Activated T-helper 1 cell treated with anti-CD3 and anti-CD28 coated beads, Interleukin-12 subunit alpha, Interleukin-12 subunit beta, Interleukin-2, Interleukin-4 antibody, amounts not matched to agents 30 ng/mL and 10 ng/mL and 1 ng/mL, durations not matched to agents 14 hours and 24 hours and 36 hours (primary cell): ENCODE measurements at regions of chr15 and their contacts with region 1.

Region 1: GRCh38 chr15:50908210-50909009 is at the start of gene AP4E1:
- DNase-seq: peak; percentile 91
- H3K4me3 Mint-ChIP-seq: peak within 1 kb of the TSS; percentile 96
- H3K27ac Mint-ChIP-seq: peak within 1 kb of the TSS; percentile 98
- H3K4me1 Mint-ChIP-seq: peaks cover 15% of the 10 kb centered on the region
- H3K27me3 Mint-ChIP-seq: peaks cover 2% of the 10 kb centered on the region
- total RNA-seq, gene AP4E1: 15.8 and 17.0 TPM in 2 replicates

Region 2: DNA sequence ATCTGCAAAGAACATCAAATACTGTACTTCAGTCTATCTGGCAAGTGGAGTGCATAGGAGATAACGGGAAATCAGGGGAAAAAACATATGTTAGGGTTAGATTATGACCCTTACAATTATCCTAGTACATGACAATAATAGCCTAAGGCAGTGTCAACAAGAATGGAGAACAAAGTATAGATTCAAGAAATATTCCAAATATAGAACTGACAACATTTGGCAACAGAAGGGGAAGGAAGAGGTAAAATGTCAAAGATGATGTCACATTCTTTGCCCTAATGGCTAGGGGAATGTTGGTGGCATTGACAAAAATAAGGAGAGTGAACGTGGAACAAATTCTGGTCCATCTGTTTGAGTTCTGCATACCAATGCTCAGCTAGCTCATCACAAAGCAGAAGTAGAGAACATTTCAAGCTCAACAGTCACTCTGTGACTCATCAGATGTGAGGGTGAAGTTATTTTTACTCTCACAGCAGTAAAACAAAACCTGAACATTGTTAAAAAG is 773.8 kb before region 1 on chr15:
- intact Hi-C with region 1: loop called (anchors 1 kb)
- DNase-seq: no peak
- H3K4me3 Mint-ChIP-seq: peak overlapping the region; percentile 20
- H3K27ac Mint-ChIP-seq: peak overlapping the region; percentile 89
- H3K4me1 Mint-ChIP-seq: peaks cover 56% of the 10 kb centered on the region
- H3K27me3 Mint-ChIP-seq: no peaks in the 10 kb centered on the region

Region 3: GRCh38 chr15:50260969-50261496 is 647.4 kb before region 1 on chr15:
- intact Hi-C with region 1: loop called (anchors 1 kb)
- DNase-seq: no peak
- H3K4me3 Mint-ChIP-seq: peak overlapping the region; percentile 66
- H3K27ac Mint-ChIP-seq: peak overlapping the region; percentile 98
- H3K4me1 Mint-ChIP-seq: peaks cover 79% of the 10 kb centered on the region
- H3K27me3 Mint-ChIP-seq: no peaks in the 10 kb centered on the region

Region 4: GRCh38 chr15:50424066-50424890 is 484.1 kb before region 1 on chr15 and contains the start of gene USP8:
- intact Hi-C with region 1: loop called (anchors 2 kb)
- DNase-seq: peak; percentile 92
- H3K4me3 Mint-ChIP-seq: peak within 1 kb of the TSS; percentile 98
- H3K27ac Mint-ChIP-seq: peak within 1 kb of the TSS; percentile 92
- H3K4me1 Mint-ChIP-seq: peaks cover 25% of the 10 kb centered on the region
- H3K27me3 Mint-ChIP-seq: no peaks in the 10 kb centered on the region
- total RNA-seq, gene USP8: 66.2 and 66.3 TPM in 2 replicates

Region 5: DNA sequence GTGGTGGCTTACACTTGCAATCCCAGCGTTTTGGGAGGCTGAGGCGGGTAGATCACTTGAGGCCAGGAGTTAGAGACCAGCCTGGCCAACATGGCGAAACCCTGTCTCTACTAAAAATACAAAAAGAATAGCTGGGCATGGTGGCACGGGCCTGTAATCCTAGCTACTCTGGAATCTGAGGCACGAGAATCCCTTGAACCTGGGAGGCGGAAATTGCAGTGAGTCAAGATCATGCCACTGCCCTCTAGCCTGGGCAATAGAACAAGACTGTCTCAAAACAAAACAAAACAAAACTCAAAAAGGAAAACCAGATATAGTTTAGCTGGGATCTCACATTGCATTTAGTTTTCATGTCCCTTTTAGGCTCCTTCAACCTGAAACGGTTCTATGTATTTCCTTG is 359.1 kb before region 1 on chr15:
- intact Hi-C with region 1: no loop called
- DNase-seq: no peak
- H3K4me3 Mint-ChIP-seq: no peak overlapping the region
- H3K27ac Mint-ChIP-seq: no peak overlapping the region
- H3K4me1 Mint-ChIP-seq: peaks cover 6% of the 10 kb centered on the region
- H3K27me3 Mint-ChIP-seq: peaks cover 8% of the 10 kb centered on the region

Region 6: GRCh38 chr15:50653156-50653745 is 255.2 kb before region 1 on chr15:
- intact Hi-C with region 1: loop called (anchors 1 kb)
- DNase-seq: no peak
- H3K4me3 Mint-ChIP-seq: no peak overlapping the region
- H3K27ac Mint-ChIP-seq: no peak overlapping the region
- H3K4me1 Mint-ChIP-seq: peaks cover 7% of the 10 kb centered on the region
- H3K27me3 Mint-ChIP-seq: no peaks in the 10 kb centered on the region

Region 7: DNA sequence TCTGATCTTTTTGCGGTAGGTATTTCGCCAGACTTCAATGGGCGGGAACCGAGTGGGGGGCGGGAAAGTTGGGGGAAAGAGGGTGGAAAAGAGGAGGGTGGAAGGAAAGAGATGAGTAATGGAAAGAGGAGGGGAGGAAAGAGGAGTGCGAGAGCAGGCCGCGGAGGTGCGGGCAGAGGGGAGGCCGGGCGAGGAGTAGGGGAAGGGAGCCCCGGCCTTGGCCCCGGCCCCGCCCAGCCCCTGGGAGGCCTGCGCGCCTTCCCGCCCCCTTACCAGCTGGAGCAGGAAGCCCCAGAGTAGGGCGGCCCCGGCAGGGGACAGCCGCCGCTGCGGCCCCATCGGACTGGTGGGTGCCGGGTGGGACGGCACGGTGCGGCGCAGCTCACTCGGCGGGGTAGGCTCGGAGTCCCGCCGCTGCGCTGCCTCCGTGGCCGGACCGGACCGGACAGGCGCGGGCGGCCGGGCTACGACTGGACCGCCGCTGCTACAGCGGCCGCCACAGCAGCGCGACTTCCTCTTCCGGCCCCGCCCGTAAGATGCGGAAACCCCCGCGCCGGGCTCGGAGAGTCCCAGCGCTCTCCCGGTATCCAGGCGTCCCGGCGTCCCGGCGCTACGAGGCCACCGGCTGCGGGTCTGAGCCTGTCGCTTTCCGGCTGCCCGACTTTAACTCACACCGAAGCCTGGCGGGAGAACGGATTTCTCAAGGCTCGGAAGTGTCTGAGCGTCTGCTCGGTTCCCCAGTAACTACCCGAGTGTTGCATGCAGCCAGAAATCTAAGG is 143.0 kb before region 1 on chr15 and contains the start of gene SPPL2A:
- intact Hi-C with region 1: loop called (anchors 1 kb)
- DNase-seq: peak; percentile 77
- H3K4me3 Mint-ChIP-seq: peak within 1 kb of the TSS; percentile 96
- H3K27ac Mint-ChIP-seq: peak within 1 kb of the TSS; percentile 97
- H3K4me1 Mint-ChIP-seq: peaks cover 69% of the 10 kb centered on the region
- H3K27me3 Mint-ChIP-seq: no peaks in the 10 kb centered on the region
- total RNA-seq, gene SPPL2A: 100 and 103 TPM in 2 replicates